ENCODE measurements at regions of chr3 and their contacts with region 1.

Region 1: GRCh38 chr3:38634111-38634510 is 15.4 kb downstream of the SCN5A start:
- DNase-seq: no peak
- ATAC-seq: no peak
- H3K4me3 ChIP-seq: no peak overlapping the region
- H3K4me3 Mint-ChIP-seq: no peak overlapping the region
- H3K27ac ChIP-seq: no peak overlapping the region
- H3K27ac Mint-ChIP-seq: no peak overlapping the region
- H3K4me1 ChIP-seq: no peaks in the 10 kb centered on the region
- H3K4me1 Mint-ChIP-seq: no peaks in the 10 kb centered on the region
- H3K27me3 ChIP-seq: no peaks in the 10 kb centered on the region
- H3K27me3 Mint-ChIP-seq: peaks cover 6% of the 10 kb centered on the region
- CTCF ChIP-seq: no peak

Region 2: DNA sequence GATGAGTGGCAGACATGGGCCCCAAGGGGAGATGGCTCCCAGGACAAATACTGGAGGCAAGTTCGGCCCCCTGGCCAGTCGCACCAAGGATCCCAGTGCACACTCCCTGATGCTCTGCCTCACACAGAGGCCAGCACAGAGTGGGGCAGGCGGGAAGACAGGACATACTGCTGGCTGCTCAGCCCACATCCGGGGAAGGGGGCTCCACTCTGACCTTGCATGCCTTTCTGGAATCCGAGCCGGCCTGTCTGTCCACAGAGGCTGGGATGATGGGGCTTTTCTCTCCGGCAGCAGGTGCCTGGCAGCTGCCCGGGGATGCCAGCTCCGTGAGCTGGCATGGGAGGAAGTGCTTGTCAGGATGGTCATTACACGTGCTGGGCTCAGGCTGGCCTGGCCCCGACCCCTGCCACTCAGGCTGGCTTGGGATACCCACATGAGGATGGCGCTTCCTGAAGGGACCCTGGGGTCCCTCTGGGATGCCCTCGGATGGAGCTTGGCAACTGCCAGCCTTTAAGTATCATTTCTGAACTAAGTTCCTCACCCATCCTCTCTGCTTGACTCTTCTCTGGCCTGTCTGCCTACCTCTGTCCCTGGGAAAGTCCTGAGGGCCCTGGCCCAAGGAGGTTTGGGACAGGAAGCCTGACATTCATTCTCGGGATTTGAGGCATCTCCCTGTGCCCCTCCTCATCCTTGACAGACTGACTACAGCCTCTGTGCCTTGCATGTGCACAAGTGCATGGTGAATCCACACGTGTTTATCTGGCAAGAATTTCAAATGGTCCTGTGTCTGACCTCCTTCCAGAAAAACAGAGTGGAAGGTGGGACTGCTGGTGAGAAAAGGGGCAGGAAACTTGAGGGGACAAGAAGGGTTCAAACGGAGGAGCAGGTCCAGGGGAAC is 91.5 kb before region 1 on chr3:
- CTCF ChIA-PET with region 1: no interaction called
- POLR2A ChIA-PET with region 1: no interaction called
- intact Hi-C with region 1: loop called in 1 of 2 experiments (anchors 5 kb)
- DNase-seq: no peak
- ATAC-seq: no peak
- H3K4me3 ChIP-seq: no peak overlapping the region
- H3K4me3 Mint-ChIP-seq: no peak overlapping the region
- H3K27ac ChIP-seq: no peak overlapping the region
- H3K27ac Mint-ChIP-seq: no peak overlapping the region
- H3K4me1 ChIP-seq: no peaks in the 10 kb centered on the region
- H3K4me1 Mint-ChIP-seq: no peaks in the 10 kb centered on the region
- H3K27me3 ChIP-seq: no peaks in the 10 kb centered on the region
- H3K27me3 Mint-ChIP-seq: no peaks in the 10 kb centered on the region
- CTCF ChIP-seq: no peak

Measured in CD4-positive, alpha-beta T cell (primary cell).